ENCODE measurements at regions of chr6 and their contacts with region 1.

Region 1: GRCh38 chr6:111721753-111722154 is 116.1 kb upstream of the TRAF3IP2 start:
- DNase-seq: peak; percentile 24
- ATAC-seq: peak; percentile 78
- H3K4me3 ChIP-seq: no peak overlapping the region
- H3K27ac ChIP-seq: no peak overlapping the region
- H3K4me1 ChIP-seq: no peaks in the 10 kb centered on the region
- H3K27me3 ChIP-seq: no peaks in the 10 kb centered on the region
- CTCF ChIP-seq: peak; percentile 74
- EP300 ChIP-seq: no peak
- POLR2A ChIP-seq: no peak
- RAD21 ChIP-seq: peak; percentile 66

Region 2: DNA sequence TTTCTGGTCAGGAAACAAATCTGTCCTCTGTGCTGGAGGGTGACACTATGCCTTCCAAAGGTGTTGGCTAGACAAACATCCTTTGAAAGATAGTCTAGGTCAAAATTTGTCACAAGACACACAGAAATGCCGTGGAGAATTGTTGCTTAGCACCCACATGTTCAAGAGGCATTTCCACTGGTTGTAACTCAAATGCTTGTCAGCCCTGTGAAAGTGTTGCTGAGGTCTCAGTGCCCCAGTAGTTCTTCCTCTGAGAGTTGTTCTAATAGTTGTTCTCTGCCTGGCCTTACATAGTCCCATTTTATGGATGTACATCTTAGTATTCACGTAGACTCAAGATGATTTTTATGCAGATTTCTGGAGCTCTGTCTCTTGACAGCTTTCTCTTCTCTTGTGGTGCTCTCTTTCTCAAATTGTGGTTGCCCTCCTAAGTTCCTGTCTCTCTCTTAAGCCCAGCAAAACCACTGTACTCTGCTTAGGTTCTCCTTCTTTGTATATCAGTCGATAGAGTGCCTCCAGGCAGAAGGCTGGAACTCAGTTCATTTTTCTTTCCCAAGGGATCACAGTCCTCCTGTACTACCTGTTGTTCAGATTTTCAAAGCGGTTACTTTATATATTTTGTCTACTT is 199.2 kb before region 1 on chr6:
- CTCF ChIA-PET with region 1: no interaction called
- POLR2A ChIA-PET with region 1: no interaction called
- in situ Hi-C with region 1: no loop called
- intact Hi-C with region 1: no loop called
- DNase-seq: no peak
- ATAC-seq: no peak; the same call in 2 of the 3 replicates
- H3K4me3 ChIP-seq: no peak overlapping the region
- H3K27ac ChIP-seq: no peak overlapping the region
- H3K4me1 ChIP-seq: peaks cover 7% of the 10 kb centered on the region; the same call in 1 of the 2 replicates
- H3K27me3 ChIP-seq: no peaks in the 10 kb centered on the region
- CTCF ChIP-seq: no peak
- EP300 ChIP-seq: no peak
- POLR2A ChIP-seq: no peak
- RAD21 ChIP-seq: no peak

Region 3: DNA sequence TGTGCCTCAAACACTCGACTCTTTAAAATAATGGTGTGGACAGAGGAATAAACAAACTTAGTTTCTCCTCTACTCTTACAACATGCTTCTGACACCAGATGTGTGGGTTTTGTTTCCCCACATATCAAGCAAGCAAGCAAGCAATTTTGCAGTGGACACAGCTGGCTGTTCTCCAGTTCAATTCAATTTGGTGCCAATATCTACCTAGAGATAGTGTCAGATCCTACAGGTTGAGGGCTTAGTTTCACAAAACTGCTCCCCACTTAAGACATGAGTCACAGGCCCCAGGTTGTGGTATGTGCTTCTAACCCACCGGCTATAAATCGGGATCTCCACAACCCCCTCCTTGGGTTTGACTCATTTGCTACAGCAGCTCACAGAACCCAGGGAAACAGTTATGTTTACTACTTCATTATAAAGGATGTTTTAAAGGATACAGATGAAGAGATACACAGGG is 15.3 kb after region 1 on chr6:
- CTCF ChIA-PET with region 1: no interaction called
- POLR2A ChIA-PET with region 1: no interaction called
- in situ Hi-C with region 1: no loop called
- intact Hi-C with region 1: no loop called
- DNase-seq: peak; percentile 41
- ATAC-seq: peak; percentile 61
- H3K4me3 ChIP-seq: no peak overlapping the region
- H3K27ac ChIP-seq: no peak overlapping the region
- H3K4me1 ChIP-seq: peaks cover 35% of the 10 kb centered on the region
- H3K27me3 ChIP-seq: no peaks in the 10 kb centered on the region
- CTCF ChIP-seq: no peak
- EP300 ChIP-seq: no peak
- POLR2A ChIP-seq: no peak
- RAD21 ChIP-seq: no peak

Region 4: GRCh38 chr6:111777357-111777756 is 55.6 kb after region 1 on chr6:
- CTCF ChIA-PET with region 1: no interaction called
- POLR2A ChIA-PET with region 1: no interaction called
- in situ Hi-C with region 1: no loop called
- intact Hi-C with region 1: loop called (anchors 1 kb)
- DNase-seq: no peak
- ATAC-seq: peak; percentile 43; the same call in 1 of the 3 replicates
- H3K4me3 ChIP-seq: no peak overlapping the region
- H3K27ac ChIP-seq: no peak overlapping the region
- H3K4me1 ChIP-seq: no peaks in the 10 kb centered on the region
- H3K27me3 ChIP-seq: no peaks in the 10 kb centered on the region
- CTCF ChIP-seq: 0 out of 2 replicates have a peak, but pooled peaks have one; percentile 10
- EP300 ChIP-seq: no peak
- POLR2A ChIP-seq: no peak
- RAD21 ChIP-seq: no peak

Region 5: DNA sequence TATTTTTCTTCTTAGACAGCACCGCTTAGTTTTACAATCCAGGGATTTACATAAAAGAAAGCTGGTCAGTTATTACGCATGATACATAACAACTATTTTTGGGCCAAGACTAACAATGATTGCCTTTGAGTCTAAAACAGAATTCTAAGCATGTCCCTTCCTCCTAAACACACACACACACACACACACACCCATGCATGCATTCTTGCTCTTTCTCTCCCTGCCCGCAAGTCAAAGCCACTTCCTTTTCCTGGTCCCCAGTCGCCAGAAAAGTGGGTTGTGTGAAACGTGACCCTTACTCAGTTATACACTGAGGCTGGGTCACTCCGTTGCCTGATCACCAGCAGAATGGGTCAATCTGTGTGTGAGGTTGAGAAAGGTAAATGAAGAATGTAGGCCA is 120.1 kb after region 1 on chr6:
- CTCF ChIA-PET with region 1: no interaction called
- POLR2A ChIA-PET with region 1: no interaction called
- in situ Hi-C with region 1: no loop called
- intact Hi-C with region 1: loop called (anchors 1 kb)
- DNase-seq: no peak
- ATAC-seq: no peak
- H3K4me3 ChIP-seq: no peak overlapping the region
- H3K27ac ChIP-seq: no peak overlapping the region
- H3K4me1 ChIP-seq: peaks cover 53% of the 10 kb centered on the region
- H3K27me3 ChIP-seq: no peaks in the 10 kb centered on the region
- CTCF ChIP-seq: no peak
- EP300 ChIP-seq: no peak
- POLR2A ChIP-seq: no peak
- RAD21 ChIP-seq: no peak

Region 6: GRCh38 chr6:111873178-111874024 is 151.6 kb after region 1 on chr6 and contains the start of gene FYN:
- CTCF ChIA-PET with region 1: no interaction called
- POLR2A ChIA-PET with region 1: no interaction called
- in situ Hi-C with region 1: no loop called
- intact Hi-C with region 1: loop called (anchors 5 kb)
- DNase-seq: peak; percentile 92
- ATAC-seq: peak; percentile 99
- H3K4me3 ChIP-seq: peak within 1 kb of the TSS; percentile 66 to 82 (median 68)
- H3K27ac ChIP-seq: no peak within 1 kb of the TSS
- H3K4me1 ChIP-seq: peaks cover 40% of the 10 kb centered on the region
- H3K27me3 ChIP-seq: peaks cover 0 to 21% of the 10 kb centered on the region in 2 experiments; a peak in 4 of 5 replicates
- CTCF ChIP-seq: peak; percentile 47
- EP300 ChIP-seq: no peak
- POLR2A ChIP-seq: no peak; a peak in 1 of 4 replicates
- RAD21 ChIP-seq: peak; percentile 56; the same call in 1 of the 2 replicates
- total RNA-seq, gene FYN: 14.6 and 15.5 TPM in 2 replicates

Region 7: GRCh38 chr6:111997078-111997852 is 275.5 kb after region 1 on chr6:
- CTCF ChIA-PET with region 1: interaction called, 36 read pairs
- POLR2A ChIA-PET with region 1: no interaction called
- in situ Hi-C with region 1: no loop called
- intact Hi-C with region 1: loop called (anchors 1 kb)
- DNase-seq: peak; percentile 71
- ATAC-seq: peak; percentile 98
- H3K4me3 ChIP-seq: no peak overlapping the region
- H3K27ac ChIP-seq: no peak overlapping the region
- H3K4me1 ChIP-seq: 0 out of 2 replicates have a peak, but pooled peaks cover 5% of the 10 kb centered on the region
- H3K27me3 ChIP-seq: peaks cover 0 to 28% of the 10 kb centered on the region in 2 experiments; a peak in 3 of 5 replicates
- CTCF ChIP-seq: peak; percentile 98
- EP300 ChIP-seq: no peak
- POLR2A ChIP-seq: no peak
- RAD21 ChIP-seq: peak; percentile 91

Measured in HepG2 (cell line).